Naive thymus-derived CD4-positive, alpha-beta T cell (primary cell): ENCODE measurements at regions of chr6 and their contacts with region 1.

Region 1: GRCh38 chr6:73329201-73329600 is 24.9 kb downstream of the DPPA5 start:
- DNase-seq: no peak
- ATAC-seq: no peak
- H3K4me3 ChIP-seq: no peak overlapping the region
- H3K4me3 Mint-ChIP-seq: no peak overlapping the region
- H3K27ac ChIP-seq: no peak overlapping the region
- H3K27ac Mint-ChIP-seq: no peak overlapping the region
- H3K4me1 ChIP-seq: no peaks in the 10 kb centered on the region
- H3K4me1 Mint-ChIP-seq: peaks cover 0 to 6% (median 0%) of the 10 kb centered on the region in 7 donors
- H3K27me3 ChIP-seq: no peaks in the 10 kb centered on the region
- H3K27me3 Mint-ChIP-seq: peaks cover 4 to 42% (median 19%) of the 10 kb centered on the region in 5 donors

Region 2: DNA sequence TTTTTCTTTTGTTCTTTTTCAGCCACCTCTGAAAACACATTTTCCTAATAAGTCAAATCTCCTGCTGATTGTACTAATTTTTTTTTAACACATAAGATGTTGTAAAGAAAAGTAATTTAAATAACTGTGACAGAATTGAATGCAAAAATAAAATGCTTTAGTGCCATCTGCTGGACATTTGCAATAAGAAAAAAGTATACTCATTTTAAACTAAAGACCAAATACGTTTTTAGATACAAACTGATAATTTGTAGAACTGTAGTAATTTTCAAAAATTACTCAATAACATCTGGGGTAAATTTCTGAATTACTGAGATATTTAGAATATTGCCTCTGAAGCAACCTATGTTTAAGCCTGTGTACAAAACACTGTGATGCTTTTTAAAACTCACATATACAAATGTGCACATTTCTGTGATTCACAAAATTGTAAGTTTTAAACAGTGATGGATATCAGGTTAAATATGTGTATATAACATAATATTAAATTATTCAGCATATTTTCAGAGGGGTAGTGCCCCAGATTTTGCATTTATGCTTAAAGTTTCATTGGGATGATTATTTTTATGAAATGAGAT is 1244.1 kb before region 1 on chr6:
- CTCF ChIA-PET with region 1: no interaction called
- POLR2A ChIA-PET with region 1: no interaction called
- intact Hi-C with region 1: loop called in 1 of 2 experiments (anchors 10 kb)
- DNase-seq: no peak
- ATAC-seq: no peak
- H3K4me3 ChIP-seq: no peak overlapping the region
- H3K4me3 Mint-ChIP-seq: no peak overlapping the region
- H3K27ac ChIP-seq: no peak overlapping the region
- H3K27ac Mint-ChIP-seq: no peak overlapping the region
- H3K4me1 ChIP-seq: no peaks in the 10 kb centered on the region
- H3K4me1 Mint-ChIP-seq: no peaks in the 10 kb centered on the region
- H3K27me3 ChIP-seq: no peaks in the 10 kb centered on the region
- H3K27me3 Mint-ChIP-seq: no peaks in the 10 kb centered on the region

Region 3: DNA sequence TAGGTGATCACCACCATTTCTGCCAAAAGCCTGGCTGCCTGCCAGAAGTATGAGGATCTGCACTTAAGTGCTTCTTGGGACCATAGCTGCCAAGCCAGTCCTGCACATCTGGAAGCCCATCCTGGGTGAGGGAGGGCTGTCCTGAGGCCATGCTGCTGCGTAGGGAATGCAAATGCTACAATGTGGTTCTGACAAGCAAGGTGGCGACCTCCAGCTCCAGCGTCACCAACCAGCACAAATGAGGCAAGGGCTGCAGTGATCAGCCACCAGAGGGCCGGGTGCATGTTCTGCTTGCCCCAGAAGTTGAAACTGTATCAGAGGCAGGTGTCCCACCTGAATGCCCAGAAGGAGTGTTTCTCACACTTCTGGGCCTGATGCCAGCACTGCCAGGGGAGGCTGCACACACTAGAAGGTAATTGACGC is 806.5 kb before region 1 on chr6:
- CTCF ChIA-PET with region 1: no interaction called
- POLR2A ChIA-PET with region 1: no interaction called
- intact Hi-C with region 1: loop called in 1 of 2 experiments (anchors 1 kb)
- DNase-seq: peak in 8 of 9 donors; percentile 7 to 54 (median 22)
- ATAC-seq: no peak
- H3K4me3 ChIP-seq: no peak overlapping the region
- H3K4me3 Mint-ChIP-seq: no peak overlapping the region
- H3K27ac ChIP-seq: no peak overlapping the region
- H3K27ac Mint-ChIP-seq: no peak overlapping the region
- H3K4me1 ChIP-seq: no peaks in the 10 kb centered on the region
- H3K4me1 Mint-ChIP-seq: no peaks in the 10 kb centered on the region
- H3K27me3 ChIP-seq: peaks cover 0 to 3% of the 10 kb centered on the region in 2 donors
- H3K27me3 Mint-ChIP-seq: peaks cover 0 to 13% (median 4%) of the 10 kb centered on the region in 5 donors

Region 4: DNA sequence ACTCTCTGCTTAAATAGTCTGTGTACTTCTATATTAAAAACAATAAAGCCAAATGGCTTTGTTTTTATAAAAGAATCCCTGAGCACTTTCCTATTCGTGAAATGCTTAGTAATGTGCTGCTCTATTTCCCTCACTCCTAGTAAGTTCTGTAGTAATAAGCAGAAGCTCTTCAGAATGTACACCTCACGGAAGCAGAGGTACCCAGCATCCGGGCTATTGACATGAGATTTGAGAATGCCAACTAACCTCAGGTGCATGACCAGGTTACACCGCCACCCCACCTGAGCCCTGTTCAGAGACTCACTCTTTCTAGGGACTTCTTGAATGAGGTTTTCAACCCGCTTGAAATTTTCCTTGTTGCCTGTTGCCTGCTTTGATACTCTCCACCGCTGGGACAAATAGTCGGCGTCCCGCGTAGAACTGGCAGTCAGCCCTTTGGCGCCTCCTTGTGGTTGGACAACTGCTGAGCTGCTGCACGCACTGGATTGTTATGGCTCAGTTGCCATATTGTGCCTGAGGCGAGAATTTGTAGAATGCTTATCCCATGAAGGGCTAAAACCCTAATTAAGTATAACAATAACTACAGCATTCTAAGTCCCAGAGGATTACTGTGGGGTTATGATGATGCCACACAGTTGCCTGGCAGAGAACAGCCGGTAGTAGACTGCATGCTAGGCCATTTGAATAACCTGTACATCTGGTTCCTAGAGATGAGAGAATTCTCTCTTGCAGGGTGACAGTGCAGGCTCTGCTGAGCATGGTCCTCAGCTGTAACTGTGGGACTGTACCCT is 199.4 kb before region 1 on chr6:
- CTCF ChIA-PET with region 1: no interaction called
- POLR2A ChIA-PET with region 1: no interaction called
- intact Hi-C with region 1: loop called (anchors 1 kb)
- DNase-seq: peak; percentile 52 to 85 (median 77)
- ATAC-seq: peak; percentile 93
- H3K4me3 ChIP-seq: no peak overlapping the region
- H3K4me3 Mint-ChIP-seq: peak overlapping the region in 8 of 10 donors; percentile 23 to 71 (median 52)
- H3K27ac ChIP-seq: no peak overlapping the region
- H3K27ac Mint-ChIP-seq: peak overlapping the region in 1 of 9 donors; percentile 48
- H3K4me1 ChIP-seq: no peaks in the 10 kb centered on the region
- H3K4me1 Mint-ChIP-seq: peaks cover 0 to 6% (median 3%) of the 10 kb centered on the region in 7 donors
- H3K27me3 ChIP-seq: no peaks in the 10 kb centered on the region
- H3K27me3 Mint-ChIP-seq: peaks cover 0 to 4% (median 0%) of the 10 kb centered on the region in 5 donors

Region 5: DNA sequence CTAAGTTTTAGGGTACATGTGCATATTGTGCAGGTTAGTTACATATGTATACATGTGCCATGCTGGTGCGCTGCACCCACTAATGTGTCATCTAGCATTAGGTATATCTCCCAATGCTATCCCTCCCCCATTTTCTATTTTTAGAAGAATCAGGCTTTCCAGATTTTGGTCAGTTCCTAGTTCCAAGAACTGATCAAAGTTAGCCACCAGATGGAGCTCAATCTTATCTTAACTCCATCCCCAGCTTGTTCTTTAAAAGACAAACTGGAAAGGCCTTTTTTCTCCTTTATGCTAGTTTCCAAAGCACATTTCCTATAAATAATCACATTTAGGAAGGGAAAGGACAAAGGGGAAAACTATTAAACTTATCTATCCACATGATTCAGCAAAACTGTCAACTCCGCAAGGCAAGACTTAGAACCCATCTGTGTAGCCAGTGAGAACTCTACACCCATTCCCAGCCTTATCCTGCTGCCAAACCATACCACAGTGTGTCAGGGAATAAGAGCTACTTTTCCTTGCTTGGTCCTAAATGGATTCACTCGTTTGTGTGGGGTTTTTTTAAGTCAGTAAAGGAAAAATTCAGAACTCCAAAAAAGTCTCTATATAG is 43.4 kb before region 1 on chr6:
- CTCF ChIA-PET with region 1: interaction called, 4 read pairs
- POLR2A ChIA-PET with region 1: no interaction called
- intact Hi-C with region 1: loop called (anchors 1 kb)
- DNase-seq: no peak
- ATAC-seq: no peak
- H3K4me3 ChIP-seq: no peak overlapping the region
- H3K4me3 Mint-ChIP-seq: no peak overlapping the region
- H3K27ac ChIP-seq: no peak overlapping the region
- H3K27ac Mint-ChIP-seq: no peak overlapping the region
- H3K4me1 ChIP-seq: no peaks in the 10 kb centered on the region
- H3K4me1 Mint-ChIP-seq: peaks cover 0 to 4% (median 0%) of the 10 kb centered on the region in 7 donors
- H3K27me3 ChIP-seq: no peaks in the 10 kb centered on the region
- H3K27me3 Mint-ChIP-seq: no peaks in the 10 kb centered on the region